ENCODE measurements at regions of chr2 and their contacts with region 1.

Region 1: DNA sequence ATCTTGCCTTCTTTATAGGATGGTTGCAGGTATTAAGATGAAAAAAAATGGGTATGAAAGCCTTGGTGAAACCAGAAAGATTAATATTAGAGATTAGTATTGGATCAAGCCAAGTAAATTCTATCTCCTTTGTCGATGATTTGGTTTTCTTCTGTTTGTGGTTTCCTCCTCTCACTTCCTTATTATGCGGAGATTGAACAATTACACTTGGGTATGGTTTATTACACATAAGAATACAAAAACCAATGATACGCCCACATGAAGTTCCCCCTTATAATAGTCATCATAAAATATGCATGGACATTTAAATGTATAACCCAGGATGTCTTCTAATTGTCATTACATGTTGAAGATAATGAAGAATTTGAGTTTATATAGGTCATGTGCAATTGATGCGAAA is 4.9 kb downstream of the LTBP1 start:
- DNase-seq: no peak
- ATAC-seq: no peak

Region 2: DNA sequence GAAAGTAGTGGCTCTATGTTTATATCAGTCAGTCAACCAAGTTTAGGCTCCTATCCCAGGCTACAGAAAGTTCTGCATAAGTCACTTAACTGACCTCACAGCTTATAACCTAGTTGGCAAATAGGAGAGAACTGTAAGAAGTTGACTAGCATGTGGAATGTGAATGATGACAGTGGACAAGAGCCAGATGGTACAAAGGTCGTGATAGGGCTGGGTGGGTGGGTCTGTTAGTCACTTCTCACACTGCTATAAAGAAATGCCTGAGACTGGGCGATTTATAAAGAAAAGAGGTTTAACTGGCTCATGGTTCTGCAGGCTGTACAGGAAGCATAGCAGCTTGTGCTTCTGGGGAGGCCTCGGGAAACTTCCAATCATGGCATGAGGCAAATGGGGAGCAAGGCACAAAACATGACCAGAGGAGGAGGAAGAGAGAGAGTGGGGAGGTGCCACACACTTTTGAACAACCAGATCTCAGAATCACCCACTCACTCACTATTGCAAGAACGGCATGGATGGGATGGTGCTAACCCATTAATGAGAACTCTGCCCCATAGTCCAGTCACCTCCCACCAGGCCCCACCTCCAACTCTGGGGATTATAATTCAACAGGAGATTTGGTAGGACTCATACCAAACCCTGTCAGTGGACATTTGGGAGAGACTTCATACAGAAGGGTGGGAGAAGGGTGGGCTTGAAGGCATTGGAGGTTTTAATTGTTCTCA is 63.9 kb after region 1 on chr2:
- intact Hi-C with region 1: loop called (anchors 10 kb)
- DNase-seq: no peak
- ATAC-seq: peak; percentile 88

Region 3: GRCh38 chr2:33158482-33159003 is 206.9 kb after region 1 on chr2:
- intact Hi-C with region 1: no loop called
- DNase-seq: no peak
- ATAC-seq: no peak

Measured in Right ventricle myocardium superior (tissue), 1 donor.